ENCODE measurements at regions of chr1 and their contacts with region 1.

Region 1: GRCh38 chr1:90568436-90568835 is 148.7 kb downstream of the BARHL2 start:
- DNase-seq: no peak
- H3K4me3 ChIP-seq: no peak overlapping the region
- H3K27ac ChIP-seq: no peak overlapping the region
- H3K27me3 ChIP-seq: no peaks in the 10 kb centered on the region
- CTCF ChIP-seq: no peak

Region 2: DNA sequence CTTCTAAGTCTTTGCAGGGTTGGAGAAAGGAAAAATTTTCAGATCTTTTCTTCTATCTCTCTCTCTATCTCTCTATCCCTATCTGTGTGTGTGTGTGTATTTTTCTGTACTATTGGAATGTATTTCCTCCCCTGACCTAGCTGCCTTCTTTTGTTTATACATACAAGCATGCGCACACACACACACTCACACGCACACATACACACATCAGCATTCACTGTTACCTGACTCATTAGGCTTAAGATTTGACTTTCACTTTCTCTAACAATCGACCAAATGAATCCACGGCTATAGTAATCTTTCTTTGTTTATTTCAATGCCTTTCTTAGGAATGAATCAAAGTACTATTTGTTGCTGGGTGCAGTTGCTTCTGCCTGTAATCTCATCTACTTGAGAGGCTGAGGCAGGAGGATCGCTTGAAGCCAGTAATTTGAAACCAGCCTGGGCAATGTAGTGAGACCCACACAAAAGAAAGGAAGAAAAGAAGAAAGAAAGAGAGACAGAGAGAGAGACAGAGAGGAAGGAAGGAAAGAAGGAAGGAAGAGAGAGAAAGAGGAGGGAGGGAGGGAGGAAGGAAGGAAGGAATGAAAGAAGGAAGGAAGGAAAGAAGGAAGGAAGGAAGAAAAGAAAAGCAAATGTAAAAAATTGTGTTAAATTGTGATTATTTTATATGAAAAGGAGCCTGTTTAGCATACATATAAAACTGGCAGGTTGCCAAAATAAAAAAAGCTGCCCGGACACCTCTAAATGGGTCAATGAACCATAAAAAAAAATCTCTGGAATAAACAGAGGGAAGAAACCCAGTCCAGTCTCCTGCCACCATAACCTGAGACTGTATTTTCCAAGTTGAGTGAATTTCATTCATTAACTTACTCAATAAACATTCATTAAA is 366.7 kb before region 1 on chr1:
- CTCF ChIA-PET with region 1: interaction called, 10 read pairs
- POLR2A ChIA-PET with region 1: no interaction called
- DNase-seq: peak; percentile 4
- H3K4me3 ChIP-seq: peak overlapping the region; percentile 26
- H3K27ac ChIP-seq: no peak overlapping the region
- H3K27me3 ChIP-seq: no peaks in the 10 kb centered on the region
- CTCF ChIP-seq: no peak

Region 3: DNA sequence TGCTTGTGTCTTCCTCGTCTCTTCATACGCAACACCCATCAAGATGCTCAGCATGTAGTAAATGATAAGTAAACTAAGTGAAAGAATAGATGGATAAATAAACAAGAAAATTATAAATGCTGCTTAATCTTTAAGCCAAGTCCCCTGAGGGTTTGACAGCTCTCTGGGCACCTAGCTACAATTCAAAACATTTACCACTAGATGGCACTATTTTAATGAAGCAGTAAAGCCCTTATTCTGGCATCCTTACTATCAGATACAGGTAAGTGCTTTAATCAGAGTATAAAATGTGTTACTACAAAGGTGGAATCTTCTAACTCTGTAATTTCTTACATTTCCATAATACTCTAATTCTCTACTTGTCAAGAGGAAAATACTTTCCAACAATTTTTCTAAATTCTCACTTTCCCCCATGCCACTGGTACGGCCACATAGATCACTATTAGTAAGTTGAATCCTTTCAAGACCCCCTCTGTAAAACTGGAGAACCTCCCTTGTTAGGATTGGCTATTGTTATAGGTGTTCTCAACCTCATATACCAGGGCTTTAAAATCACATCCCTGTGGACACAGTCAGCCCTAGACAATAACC is 10.9 kb after region 1 on chr1:
- CTCF ChIA-PET with region 1: interaction called, 12 read pairs
- POLR2A ChIA-PET with region 1: no interaction called
- DNase-seq: no peak
- H3K4me3 ChIP-seq: no peak overlapping the region
- H3K27ac ChIP-seq: no peak overlapping the region
- H3K27me3 ChIP-seq: peaks cover 3% of the 10 kb centered on the region
- CTCF ChIP-seq: peak; percentile 67

Measured in AG04450 (cell line).